ENCODE measurements at regions of chr15 and their contacts with region 1.

Region 1: DNA sequence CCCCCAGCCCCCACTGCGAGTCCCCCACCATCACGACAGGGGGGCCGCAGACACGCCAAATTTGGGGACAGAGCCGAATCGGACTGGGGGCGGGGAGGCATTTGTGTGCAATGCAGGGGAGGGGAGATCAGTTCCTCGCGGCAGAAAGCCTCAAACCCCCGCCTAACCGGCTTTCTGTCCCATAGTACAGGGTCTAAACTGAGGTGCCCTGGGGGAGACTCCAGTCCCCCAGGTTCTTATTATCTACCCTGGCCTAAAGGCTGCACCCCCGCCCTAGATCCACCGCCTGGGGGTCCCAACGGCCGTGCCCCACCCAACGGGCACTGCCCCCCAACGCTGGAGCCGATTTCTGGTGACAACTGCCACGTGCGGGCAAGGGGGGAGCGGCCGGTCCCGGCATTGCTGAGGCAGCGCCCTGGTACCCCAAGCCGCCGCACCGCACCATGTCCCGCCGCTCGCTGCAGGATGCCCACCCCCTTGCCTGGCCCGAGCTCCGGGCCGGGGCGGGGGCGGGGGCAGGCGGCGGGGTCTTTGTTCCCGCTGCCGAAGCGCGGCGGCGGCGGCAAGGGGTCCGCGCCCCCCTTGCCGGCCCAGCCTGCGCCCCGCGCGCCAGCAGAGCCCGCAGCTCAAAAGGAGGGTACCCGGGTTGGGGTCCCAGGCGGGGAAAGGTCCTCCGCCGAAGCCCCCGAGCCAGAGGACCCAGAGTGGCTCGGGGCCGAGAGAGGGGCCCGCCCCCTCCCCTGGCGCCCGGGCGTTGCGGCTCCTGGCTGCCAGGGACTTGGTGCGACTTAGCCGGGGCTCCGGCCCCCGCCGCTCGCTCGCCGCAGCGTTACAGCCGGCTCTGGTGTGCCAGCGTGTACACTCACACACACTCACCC is 805 bp downstream of the SEMA7A start:
- DNase-seq: no peak
- H3K4me3 Mint-ChIP-seq: peak overlapping the region; percentile 80
- H3K27ac Mint-ChIP-seq: peak overlapping the region; percentile 69
- H3K4me1 Mint-ChIP-seq: peaks cover 49% of the 10 kb centered on the region
- H3K27me3 Mint-ChIP-seq: no peaks in the 10 kb centered on the region
- CTCF ChIP-seq: no peak

Region 2: GRCh38 chr15:74302821-74303359 is 130.1 kb before region 1 on chr15:
- CTCF ChIA-PET with region 1: no interaction called
- intact Hi-C with region 1: no loop called
- DNase-seq: peak; percentile 83
- H3K4me3 Mint-ChIP-seq: no peak overlapping the region
- H3K27ac Mint-ChIP-seq: no peak overlapping the region
- H3K4me1 Mint-ChIP-seq: peaks cover 8% of the 10 kb centered on the region
- H3K27me3 Mint-ChIP-seq: peaks cover 100% of the 10 kb centered on the region
- CTCF ChIP-seq: peak; percentile 86

Region 3: GRCh38 chr15:74408385-74408784 is 24.6 kb before region 1 on chr15:
- CTCF ChIA-PET with region 1: no interaction called
- intact Hi-C with region 1: no loop called
- DNase-seq: no peak
- H3K4me3 Mint-ChIP-seq: no peak overlapping the region
- H3K27ac Mint-ChIP-seq: peak overlapping the region; percentile 6
- H3K4me1 Mint-ChIP-seq: peaks cover 23% of the 10 kb centered on the region
- H3K27me3 Mint-ChIP-seq: no peaks in the 10 kb centered on the region
- CTCF ChIP-seq: no peak

Region 4: GRCh38 chr15:74420197-74420898 is 12.6 kb before region 1 on chr15:
- CTCF ChIA-PET with region 1: interaction called, 13 read pairs
- intact Hi-C with region 1: no loop called
- DNase-seq: peak; percentile 67
- H3K4me3 Mint-ChIP-seq: peak overlapping the region; percentile 5
- H3K27ac Mint-ChIP-seq: peak overlapping the region; percentile 9
- H3K4me1 Mint-ChIP-seq: peaks cover 66% of the 10 kb centered on the region
- H3K27me3 Mint-ChIP-seq: no peaks in the 10 kb centered on the region
- CTCF ChIP-seq: no peak